Vagina (tissue), 2 donors: ENCODE measurements at regions of chr21 and their contacts with region 1.

Region 1: DNA sequence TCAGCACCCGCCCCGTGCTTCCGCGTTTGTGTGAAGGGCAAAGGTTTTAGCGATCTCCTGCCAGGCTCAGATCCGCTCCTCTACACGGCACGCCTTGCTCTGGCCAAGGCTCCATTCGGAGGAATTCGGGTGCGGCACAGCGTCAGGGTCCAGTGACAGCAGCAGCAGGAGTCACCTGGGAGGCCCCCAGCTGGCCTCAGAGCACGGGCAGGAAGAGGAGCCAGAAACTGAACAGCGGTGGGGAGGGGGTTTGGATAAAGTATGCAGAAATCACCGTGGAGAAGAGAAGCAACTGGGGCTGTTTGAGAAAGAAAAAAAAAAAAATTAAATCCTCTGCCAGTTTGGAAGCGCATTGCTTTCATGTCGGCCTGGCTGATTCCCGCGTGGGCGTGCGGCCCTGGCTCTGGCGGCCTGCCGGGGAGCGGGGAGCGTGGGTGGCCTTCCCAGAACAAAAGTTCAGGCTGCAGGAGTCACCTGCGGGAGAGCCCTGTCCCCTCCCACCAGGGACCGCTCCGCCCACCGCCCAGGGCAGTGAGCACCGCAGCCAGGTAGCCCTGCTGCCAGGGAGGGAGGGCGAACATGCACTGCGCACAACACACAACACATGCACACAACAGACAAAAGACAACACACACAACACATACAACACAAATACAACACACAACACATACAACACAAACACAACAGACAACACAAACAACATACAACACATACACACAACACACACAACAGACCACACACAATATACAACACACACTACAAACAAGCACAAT is 107.6 kb downstream of the ETS2 start:
- DNase-seq: peak; percentile 92 to 96
- H3K4me3 ChIP-seq: peak overlapping the region; percentile 10 to 18
- H3K27ac ChIP-seq: peak overlapping the region; percentile 92
- H3K4me1 ChIP-seq: peaks cover 64% of the 10 kb centered on the region
- H3K27me3 ChIP-seq: no peaks in the 10 kb centered on the region
- CTCF ChIP-seq: no peak
- POLR2A ChIP-seq: no peak

Region 2: GRCh38 chr21:39114871-39115575 is 201.7 kb after region 1 on chr21:
- intact Hi-C with region 1: loop called (anchors 10 kb)
- DNase-seq: peak in 1 of 2 donors; percentile 80
- H3K4me3 ChIP-seq: no peak overlapping the region
- H3K27ac ChIP-seq: no peak overlapping the region
- H3K4me1 ChIP-seq: peaks cover 16% of the 10 kb centered on the region
- H3K27me3 ChIP-seq: no peaks in the 10 kb centered on the region
- CTCF ChIP-seq: no peak
- POLR2A ChIP-seq: no peak